Activated CD8-positive, alpha-beta T cell treated with anti-CD3 and anti-CD28 coated beads for 36 hours (primary cell): ENCODE measurements at regions of chr1 and their contacts with region 1.

Region 1: GRCh38 chr1:160474392-160475242 is 48.4 kb downstream of the SLAMF6 start:
- DNase-seq: no peak
- ATAC-seq: peak; percentile 92
- H3K4me3 Mint-ChIP-seq: no peak overlapping the region
- H3K27ac Mint-ChIP-seq: no peak overlapping the region
- H3K4me1 Mint-ChIP-seq: peaks cover 2% of the 10 kb centered on the region
- H3K27me3 Mint-ChIP-seq: no peaks in the 10 kb centered on the region
- CTCF ChIP-seq: no peak

Region 2: DNA sequence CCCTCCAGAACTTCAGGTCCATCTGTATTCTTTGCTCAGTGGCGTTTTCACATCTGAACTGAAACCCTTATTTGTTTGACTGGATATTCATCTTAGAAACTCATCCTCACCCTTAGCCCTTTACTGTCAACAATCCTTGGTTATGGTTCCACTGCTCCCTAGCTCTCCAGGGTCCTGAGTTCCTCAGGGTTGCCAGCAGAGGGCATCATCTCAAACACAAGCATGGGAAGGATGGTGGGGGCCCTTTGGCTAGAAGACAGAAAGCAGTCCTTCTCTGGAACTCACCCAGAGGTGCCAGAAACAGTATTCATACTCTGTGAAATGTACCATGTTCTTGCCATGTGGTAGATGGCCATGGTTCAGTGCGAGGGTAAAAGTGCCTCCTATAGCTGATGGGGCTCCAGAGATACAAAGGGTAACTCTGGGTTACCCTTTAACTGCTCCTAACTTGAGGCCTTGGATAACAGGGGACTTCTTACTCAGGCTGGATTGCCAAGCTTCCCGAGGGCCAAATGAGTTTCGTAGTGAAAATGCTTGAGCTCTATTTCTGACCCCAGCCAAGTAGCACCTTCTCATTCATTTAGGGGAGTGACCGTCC is 120.1 kb before region 1 on chr1:
- CTCF ChIA-PET with region 1: no interaction called
- POLR2A ChIA-PET with region 1: no interaction called
- intact Hi-C with region 1: no loop called
- DNase-seq: peak; percentile 24
- ATAC-seq: peak; percentile 70
- H3K4me3 Mint-ChIP-seq: no peak overlapping the region
- H3K27ac Mint-ChIP-seq: no peak overlapping the region
- H3K4me1 Mint-ChIP-seq: peaks cover 2% of the 10 kb centered on the region
- H3K27me3 Mint-ChIP-seq: no peaks in the 10 kb centered on the region
- CTCF ChIP-seq: peak; percentile 11

Region 3: DNA sequence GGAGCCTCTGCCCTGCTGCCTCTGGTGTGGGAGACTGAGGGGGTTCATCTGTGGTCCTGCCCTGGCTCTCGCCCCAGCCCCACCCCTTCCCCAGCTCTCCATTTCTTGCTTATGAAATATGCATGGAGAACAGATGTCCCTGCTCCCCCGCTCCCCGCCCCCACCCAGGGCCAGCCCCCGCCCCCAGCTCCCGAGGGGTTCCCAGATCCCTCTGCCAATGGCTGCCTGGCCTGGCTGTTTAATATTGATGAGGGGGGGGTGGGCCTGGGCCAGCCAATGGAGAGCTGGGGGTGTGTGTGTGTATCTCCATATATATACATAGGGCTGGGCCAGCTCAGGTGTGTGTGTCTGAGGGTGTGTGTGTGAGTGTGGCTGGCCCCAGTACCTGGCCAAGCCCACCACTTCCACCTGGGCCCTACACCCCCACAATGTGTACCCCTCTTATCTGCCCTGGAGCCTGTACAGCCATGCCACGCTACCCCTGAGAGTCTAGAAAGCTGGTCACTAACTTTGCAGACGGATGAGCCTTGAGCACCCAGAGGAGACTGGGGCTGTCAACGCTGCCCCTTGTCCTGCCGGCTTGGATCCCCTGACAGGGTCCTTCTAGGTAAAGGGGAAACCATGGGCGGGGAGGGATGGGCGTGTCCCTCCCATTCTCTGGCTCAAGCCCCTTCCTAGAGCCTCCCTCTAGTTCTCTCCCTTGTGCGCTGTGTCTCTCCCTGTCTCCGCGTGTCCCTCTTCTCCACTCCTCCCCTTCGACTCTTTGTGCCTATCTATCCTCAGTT is 107.7 kb before region 1 on chr1 and contains the start of gene NHLH1:
- CTCF ChIA-PET with region 1: no interaction called
- POLR2A ChIA-PET with region 1: no interaction called
- intact Hi-C with region 1: no loop called
- DNase-seq: no peak
- ATAC-seq: no peak
- H3K4me3 Mint-ChIP-seq: no peak within 1 kb of the TSS
- H3K27ac Mint-ChIP-seq: no peak within 1 kb of the TSS
- H3K4me1 Mint-ChIP-seq: no peaks in the 10 kb centered on the region
- H3K27me3 Mint-ChIP-seq: no peaks in the 10 kb centered on the region
- CTCF ChIP-seq: no peak
- total RNA-seq, gene NHLH1: 0.22 to 0.45 TPM

Region 4: GRCh38 chr1:160428655-160429054 is 46.0 kb before region 1 on chr1:
- CTCF ChIA-PET with region 1: interaction called, 11 read pairs
- POLR2A ChIA-PET with region 1: interaction called, 3 read pairs
- intact Hi-C with region 1: loop called (anchors 5 kb)
- DNase-seq: peak; percentile 42
- ATAC-seq: peak; percentile 53
- H3K4me3 Mint-ChIP-seq: peak overlapping the region; percentile 54
- H3K27ac Mint-ChIP-seq: peak overlapping the region; percentile 85
- H3K4me1 Mint-ChIP-seq: peaks cover 61% of the 10 kb centered on the region
- H3K27me3 Mint-ChIP-seq: no peaks in the 10 kb centered on the region
- CTCF ChIP-seq: peak; percentile 74

Region 5: DNA sequence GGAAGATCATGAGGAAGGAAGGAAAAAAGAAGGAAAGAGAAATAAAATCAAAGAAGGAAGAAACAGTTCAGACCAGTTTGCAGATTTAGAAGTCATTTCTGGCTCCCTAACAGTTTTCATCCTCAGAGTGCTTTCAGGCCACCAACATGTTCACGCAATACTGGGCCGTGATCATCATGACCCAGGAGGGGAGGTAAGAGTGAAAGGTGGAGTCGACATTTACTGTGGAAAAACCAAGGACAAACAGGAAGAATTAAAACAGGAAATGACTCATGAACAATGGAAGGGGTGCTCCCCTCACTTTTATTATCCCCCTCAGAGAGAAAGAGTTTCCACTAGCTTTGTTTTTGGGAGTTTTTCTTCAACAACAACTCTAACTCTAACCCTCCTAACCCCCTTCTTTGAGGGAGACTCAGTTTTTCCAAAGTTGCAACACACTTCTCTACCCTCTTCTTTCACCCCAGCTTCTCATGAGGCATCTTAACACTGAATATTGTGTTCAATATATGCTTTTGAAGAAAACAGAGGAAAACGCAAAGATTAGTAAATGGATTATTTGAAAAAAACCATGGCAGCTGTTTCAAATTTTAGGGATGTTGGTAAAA is 13.8 kb before region 1 on chr1:
- CTCF ChIA-PET with region 1: interaction called, 14 read pairs
- POLR2A ChIA-PET with region 1: interaction called, 5 read pairs
- intact Hi-C with region 1: no loop called
- DNase-seq: peak; percentile 63
- ATAC-seq: peak; percentile 72
- H3K4me3 Mint-ChIP-seq: peak overlapping the region; percentile 67
- H3K27ac Mint-ChIP-seq: peak overlapping the region; percentile 98
- H3K4me1 Mint-ChIP-seq: peaks cover 85% of the 10 kb centered on the region
- H3K27me3 Mint-ChIP-seq: no peaks in the 10 kb centered on the region
- CTCF ChIP-seq: no peak